ENCODE measurements at regions of chr7 and their contacts with region 1.

Region 1: GRCh38 chr7:40134428-40135316 is at the starts of genes MPLKIP and SUGCT:
- DNase-seq: peak; percentile 77 to 94 (median 84)
- ATAC-seq: peak; percentile 89
- H3K4me3 ChIP-seq: peak within 1 kb of the TSS; percentile 92
- H3K4me3 Mint-ChIP-seq: peak within 1 kb of the TSS; percentile 100
- H3K27ac ChIP-seq: peak within 1 kb of the TSS; percentile 86 to 89
- H3K27ac Mint-ChIP-seq: peak within 1 kb of the TSS; percentile 97
- H3K4me1 ChIP-seq: peaks cover 15% of the 10 kb centered on the region
- H3K4me1 Mint-ChIP-seq: peaks cover 43% of the 10 kb centered on the region
- H3K27me3 ChIP-seq: no peaks in the 10 kb centered on the region
- H3K27me3 Mint-ChIP-seq: peaks cover 3% of the 10 kb centered on the region
- CTCF ChIP-seq: peak; percentile 95
- total RNA-seq, gene MPLKIP: 14.3 to 14.9 TPM
- total RNA-seq, gene SUGCT: 0.95 to 1.2 TPM

Region 2: GRCh38 chr7:38908759-38909335 is 1225.8 kb before region 1 on chr7 and contains the start of gene VPS41:
- CTCF ChIA-PET with region 1: interaction called, 4 read pairs
- POLR2A ChIA-PET with region 1: interaction called, 5 read pairs
- intact Hi-C with region 1: loop called in 1 of 2 experiments (anchors 10 kb)
- DNase-seq: peak; percentile 61 to 91 (median 72)
- ATAC-seq: peak; percentile 99
- H3K4me3 ChIP-seq: peak within 1 kb of the TSS; percentile 94
- H3K4me3 Mint-ChIP-seq: peak within 1 kb of the TSS; percentile 98
- H3K27ac ChIP-seq: no peak within 1 kb of the TSS
- H3K27ac Mint-ChIP-seq: peak within 1 kb of the TSS; percentile 84
- H3K4me1 ChIP-seq: peaks cover 7% of the 10 kb centered on the region
- H3K4me1 Mint-ChIP-seq: peaks cover 40% of the 10 kb centered on the region
- H3K27me3 ChIP-seq: no peaks in the 10 kb centered on the region
- H3K27me3 Mint-ChIP-seq: no peaks in the 10 kb centered on the region
- CTCF ChIP-seq: no peak
- total RNA-seq, gene VPS41: 19.4 to 22.9 TPM

Region 3: DNA sequence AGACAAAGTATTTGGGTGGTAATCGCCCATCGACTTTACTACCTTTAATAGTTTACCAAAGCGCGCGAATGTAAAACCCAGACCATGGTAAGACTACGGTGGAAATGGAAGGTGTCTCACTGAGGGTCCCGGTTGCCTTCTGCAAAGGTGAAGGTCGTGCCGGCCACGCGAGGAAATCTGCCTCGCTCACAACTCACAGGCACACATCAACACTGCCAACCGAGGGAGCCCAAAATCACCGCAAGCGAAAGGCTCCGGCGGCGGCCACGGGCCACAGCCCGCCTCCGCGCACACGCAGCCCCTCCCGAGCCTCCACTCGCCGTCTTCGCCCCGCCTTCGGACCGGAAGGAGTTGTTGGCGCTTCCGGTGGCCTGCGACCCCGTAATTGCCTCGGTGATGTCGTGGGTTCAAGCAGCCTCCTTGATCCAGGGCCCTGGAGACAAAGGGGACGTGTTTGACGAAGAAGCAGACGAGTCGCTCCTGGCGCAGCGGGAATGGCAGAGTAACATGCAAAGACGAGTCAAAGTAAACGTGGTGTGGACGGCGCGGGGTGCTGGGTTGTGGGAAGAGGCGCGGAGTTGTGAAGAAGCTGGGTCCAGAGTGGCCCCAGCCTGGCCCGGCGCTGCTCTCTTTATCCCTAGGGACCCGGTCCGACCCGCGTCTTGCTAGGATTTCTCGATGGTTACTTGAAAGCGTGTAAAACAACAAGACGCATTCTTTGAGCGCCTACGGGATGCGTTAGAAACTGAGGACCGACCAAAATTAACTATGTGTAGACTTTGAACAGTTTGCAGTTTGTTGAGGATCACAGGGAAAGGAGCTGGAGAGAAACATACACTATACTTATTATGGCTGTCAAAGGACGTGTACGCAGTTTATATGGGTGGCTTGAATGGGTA is 568.4 kb before region 1 on chr7 and contains the start of gene YAE1:
- CTCF ChIA-PET with region 1: interaction called, 4 read pairs
- POLR2A ChIA-PET with region 1: interaction called, 5 read pairs
- intact Hi-C with region 1: loop called in 1 of 2 experiments (anchors 5 kb)
- DNase-seq: peak; percentile 56 to 88 (median 76)
- ATAC-seq: peak; percentile 87
- H3K4me3 ChIP-seq: peak within 1 kb of the TSS; percentile 75
- H3K4me3 Mint-ChIP-seq: peak within 1 kb of the TSS; percentile 99
- H3K27ac ChIP-seq: peak within 1 kb of the TSS; percentile 47 to 58
- H3K27ac Mint-ChIP-seq: peak within 1 kb of the TSS; percentile 90
- H3K4me1 ChIP-seq: peaks cover 7% of the 10 kb centered on the region
- H3K4me1 Mint-ChIP-seq: peaks cover 32% of the 10 kb centered on the region
- H3K27me3 ChIP-seq: no peaks in the 10 kb centered on the region
- H3K27me3 Mint-ChIP-seq: no peaks in the 10 kb centered on the region
- CTCF ChIP-seq: no peak
- total RNA-seq, gene YAE1: 5.0 to 7.4 TPM

Region 4: GRCh38 chr7:39894904-39895303 is 239.8 kb before region 1 on chr7:
- CTCF ChIA-PET with region 1: interaction called, 3 read pairs
- POLR2A ChIA-PET with region 1: no interaction called
- intact Hi-C with region 1: loop called in 1 of 2 experiments (anchors 5 kb)
- DNase-seq: no peak
- ATAC-seq: no peak
- H3K4me3 ChIP-seq: no peak overlapping the region
- H3K4me3 Mint-ChIP-seq: no peak overlapping the region
- H3K27ac ChIP-seq: no peak overlapping the region
- H3K27ac Mint-ChIP-seq: no peak overlapping the region
- H3K4me1 ChIP-seq: peaks cover 3% of the 10 kb centered on the region
- H3K4me1 Mint-ChIP-seq: no peaks in the 10 kb centered on the region
- H3K27me3 ChIP-seq: peaks cover 3 to 8% of the 10 kb centered on the region in 2 experiments
- H3K27me3 Mint-ChIP-seq: peaks cover 11% of the 10 kb centered on the region
- CTCF ChIP-seq: no peak

Region 5: DNA sequence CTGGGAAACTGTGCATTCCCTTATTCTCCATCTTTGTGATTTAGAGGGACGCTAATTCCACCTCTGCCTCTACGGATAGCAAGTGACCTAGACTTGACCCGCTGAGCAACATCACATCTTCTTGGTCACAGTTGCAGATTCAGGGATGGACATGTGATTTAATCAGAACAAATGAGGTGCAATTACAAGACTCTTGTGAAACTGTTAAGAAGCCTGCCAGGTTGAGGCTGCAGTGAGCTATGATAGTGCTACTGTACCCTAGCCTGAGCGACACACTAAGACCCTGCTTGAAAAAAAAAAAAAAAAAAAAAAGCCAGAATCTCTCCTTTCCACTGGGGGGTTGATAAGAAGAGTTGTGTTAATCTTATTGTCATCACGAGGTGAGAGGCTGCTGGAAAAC is 14.7 kb before region 1 on chr7:
- CTCF ChIA-PET with region 1: interaction called, 11 read pairs
- POLR2A ChIA-PET with region 1: interaction called, 6 read pairs
- intact Hi-C with region 1: no loop called
- DNase-seq: no peak
- ATAC-seq: no peak
- H3K4me3 ChIP-seq: no peak overlapping the region
- H3K4me3 Mint-ChIP-seq: no peak overlapping the region
- H3K27ac ChIP-seq: no peak overlapping the region
- H3K27ac Mint-ChIP-seq: no peak overlapping the region
- H3K4me1 ChIP-seq: no peaks in the 10 kb centered on the region
- H3K4me1 Mint-ChIP-seq: peaks cover 4% of the 10 kb centered on the region
- H3K27me3 ChIP-seq: no peaks in the 10 kb centered on the region
- H3K27me3 Mint-ChIP-seq: no peaks in the 10 kb centered on the region
- CTCF ChIP-seq: no peak

Region 6: GRCh38 chr7:40315277-40315676 is 180.6 kb after region 1 on chr7:
- CTCF ChIA-PET with region 1: no interaction called
- POLR2A ChIA-PET with region 1: no interaction called
- intact Hi-C with region 1: no loop called
- DNase-seq: no peak
- ATAC-seq: no peak
- H3K4me3 ChIP-seq: no peak overlapping the region
- H3K4me3 Mint-ChIP-seq: no peak overlapping the region
- H3K27ac ChIP-seq: no peak overlapping the region
- H3K27ac Mint-ChIP-seq: no peak overlapping the region
- H3K4me1 ChIP-seq: no peaks in the 10 kb centered on the region
- H3K4me1 Mint-ChIP-seq: no peaks in the 10 kb centered on the region
- H3K27me3 ChIP-seq: no peaks in the 10 kb centered on the region
- H3K27me3 Mint-ChIP-seq: no peaks in the 10 kb centered on the region
- CTCF ChIP-seq: no peak

Measured in CD4-positive, alpha-beta T cell (primary cell).